ENCODE measurements at regions of chr1 and their contacts with region 1.

Region 1: DNA sequence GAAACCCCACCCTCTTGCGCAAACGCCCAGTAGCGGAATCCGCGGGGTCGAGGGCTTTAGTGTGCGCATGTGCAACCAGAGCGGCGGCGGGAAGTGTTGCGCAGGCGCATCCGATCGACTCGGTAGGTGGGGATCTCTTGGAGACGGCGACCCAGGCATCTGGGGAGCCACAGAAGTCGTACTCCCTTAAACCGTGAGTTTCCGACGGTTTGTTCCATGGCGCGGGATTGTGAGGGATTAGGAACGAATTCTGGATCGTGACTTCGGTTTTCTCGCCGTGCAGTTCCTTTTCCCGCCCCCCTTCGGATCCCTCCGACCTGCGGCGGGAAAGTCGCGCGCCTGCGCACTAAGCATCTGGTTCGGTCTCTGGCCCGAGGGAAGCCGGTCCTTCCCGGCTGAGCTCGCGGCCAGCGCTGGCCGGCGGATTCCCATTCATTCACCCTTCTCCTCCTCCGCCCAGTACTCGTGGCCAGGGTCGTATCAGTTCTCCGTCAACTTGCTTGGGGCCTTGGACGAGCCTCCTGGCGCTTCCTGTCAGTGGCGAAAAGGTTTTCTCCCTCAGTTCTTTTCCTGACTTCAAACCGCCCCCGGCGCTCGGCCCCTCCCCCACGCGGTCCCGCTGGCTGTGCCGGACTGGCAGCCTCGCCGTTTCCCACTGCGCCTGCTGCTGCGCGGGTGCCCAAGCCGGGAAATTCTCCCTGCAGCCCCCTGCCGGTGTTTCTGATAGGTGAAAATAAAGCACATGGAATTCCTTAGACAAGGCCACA is at the start of gene CDC7:
- DNase-seq: peak; percentile 96
- H3K4me3 ChIP-seq: peak within 1 kb of the TSS; percentile 60 to 89 (median 62)
- H3K27ac ChIP-seq: peak within 1 kb of the TSS; percentile 91
- H3K4me1 ChIP-seq: peaks cover 16% of the 10 kb centered on the region
- H3K27me3 ChIP-seq: no peaks in the 10 kb centered on the region
- CTCF ChIP-seq: peak; percentile 51 to 54
- POLR2A ChIP-seq: peak; percentile 61
- total RNA-seq, gene CDC7: 11.7 and 13.4 TPM in 2 replicates

Region 2: DNA sequence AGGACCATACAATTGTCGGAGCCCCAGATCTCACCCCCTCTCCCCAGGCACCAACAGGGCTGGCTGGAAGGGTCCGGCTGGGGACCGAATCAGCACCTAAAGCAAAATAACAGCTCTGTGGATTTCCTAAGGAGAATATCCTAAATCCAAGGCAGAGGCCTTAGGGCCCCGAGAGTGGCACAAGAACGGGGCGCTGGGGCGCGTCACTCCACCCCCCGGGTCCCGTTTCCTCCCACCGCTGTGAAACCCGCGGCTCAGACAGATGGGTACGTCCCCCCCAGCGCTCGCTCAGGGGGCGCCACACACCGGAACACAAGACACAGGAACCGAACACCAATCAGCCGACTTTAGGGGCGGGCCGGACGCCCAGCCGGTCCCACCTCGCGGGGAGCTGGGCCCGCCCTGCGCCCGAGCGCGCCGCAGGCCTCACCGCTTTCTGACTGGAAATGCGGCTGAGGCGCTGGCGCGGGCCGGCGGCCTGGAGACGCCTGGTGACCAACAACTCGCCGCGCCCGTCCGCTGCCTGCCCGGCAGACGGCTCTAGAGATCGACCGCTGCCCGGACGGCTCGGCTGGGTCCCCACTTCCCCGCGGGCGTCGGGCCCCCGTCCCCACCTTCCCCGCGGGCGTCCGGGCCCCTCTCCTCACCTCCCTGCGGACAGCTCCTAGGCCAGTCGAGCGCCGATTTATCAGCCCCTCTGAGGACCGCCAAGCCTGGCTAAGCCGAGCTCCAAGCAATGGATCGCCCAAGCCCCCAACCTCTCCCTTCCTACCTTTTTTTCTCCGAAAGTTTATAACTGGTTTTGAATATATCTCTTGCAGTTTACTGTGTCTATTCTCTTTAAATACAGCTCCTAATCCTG is 96.6 kb before region 1 on chr1 and contains the start of gene HFM1:
- CTCF ChIA-PET with region 1: interaction called, 4 read pairs
- POLR2A ChIA-PET with region 1: no interaction called
- dilution Hi-C with region 1: no loop called
- intact Hi-C with region 1: loop called (anchors 2 kb)
- DNase-seq: peak; percentile 58
- H3K4me3 ChIP-seq: peak within 1 kb of the TSS; percentile 57 to 74 (median 71)
- H3K27ac ChIP-seq: no peak within 1 kb of the TSS
- H3K4me1 ChIP-seq: peaks cover 3% of the 10 kb centered on the region
- H3K27me3 ChIP-seq: peaks cover 4 to 13% of the 10 kb centered on the region in 2 experiments
- CTCF ChIP-seq: no peak
- POLR2A ChIP-seq: no peak
- total RNA-seq, gene HFM1: 0.11 and 0.72 TPM in 2 replicates

Region 3: DNA sequence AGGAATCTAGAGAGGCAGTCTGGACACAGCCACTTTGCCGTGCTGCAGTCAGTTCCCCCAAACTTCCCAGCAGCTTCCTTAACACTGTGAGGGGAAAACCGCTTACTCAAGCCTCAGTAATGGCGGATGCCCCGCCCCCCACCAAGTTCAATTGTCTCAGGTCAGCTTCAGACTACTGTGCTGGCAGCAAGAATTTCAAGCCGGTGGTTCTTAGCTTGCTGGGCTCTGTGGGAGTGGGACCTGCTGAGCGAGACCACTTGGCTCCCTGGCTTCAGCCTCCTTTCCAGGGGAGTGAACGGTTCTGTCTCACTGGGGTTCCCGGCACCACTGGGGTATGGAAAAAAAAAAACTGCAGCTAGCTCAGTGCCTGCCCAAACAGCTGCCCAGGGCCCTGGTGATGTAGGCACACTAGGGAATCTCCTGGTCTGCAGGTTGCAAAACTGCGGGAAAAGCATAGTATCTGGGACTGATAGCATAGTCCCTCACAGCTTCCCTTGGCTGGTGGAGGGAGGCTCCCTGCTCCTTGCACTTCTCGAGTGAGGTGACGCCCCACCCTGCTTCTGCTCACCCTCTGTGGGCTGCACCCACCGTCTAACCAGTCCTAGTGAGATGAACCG is 72.6 kb before region 1 on chr1:
- CTCF ChIA-PET with region 1: no interaction called
- POLR2A ChIA-PET with region 1: no interaction called
- dilution Hi-C with region 1: no loop called
- intact Hi-C with region 1: no loop called
- DNase-seq: no peak
- H3K4me3 ChIP-seq: no peak overlapping the region
- H3K27ac ChIP-seq: no peak overlapping the region
- H3K4me1 ChIP-seq: no peaks in the 10 kb centered on the region
- H3K27me3 ChIP-seq: no peaks in the 10 kb centered on the region
- CTCF ChIP-seq: no peak
- POLR2A ChIP-seq: no peak

Region 4: GRCh38 chr1:91440845-91441244 is 60.1 kb before region 1 on chr1:
- CTCF ChIA-PET with region 1: interaction called, 3 read pairs
- POLR2A ChIA-PET with region 1: no interaction called
- dilution Hi-C with region 1: no loop called
- intact Hi-C with region 1: loop called (anchors 2 kb)
- DNase-seq: peak; percentile 12
- H3K4me3 ChIP-seq: no peak overlapping the region
- H3K27ac ChIP-seq: no peak overlapping the region
- H3K4me1 ChIP-seq: no peaks in the 10 kb centered on the region
- H3K27me3 ChIP-seq: no peaks in the 10 kb centered on the region
- CTCF ChIP-seq: no peak
- POLR2A ChIP-seq: no peak

Region 5: GRCh38 chr1:91511386-91511785 is 10.4 kb after region 1 on chr1:
- CTCF ChIA-PET with region 1: interaction called, 17 read pairs
- POLR2A ChIA-PET with region 1: no interaction called
- dilution Hi-C with region 1: no loop called
- intact Hi-C with region 1: no loop called
- DNase-seq: peak; percentile 57
- H3K4me3 ChIP-seq: no peak overlapping the region
- H3K27ac ChIP-seq: no peak overlapping the region
- H3K4me1 ChIP-seq: no peaks in the 10 kb centered on the region
- H3K27me3 ChIP-seq: no peaks in the 10 kb centered on the region
- CTCF ChIP-seq: peak; percentile 24 to 43
- POLR2A ChIP-seq: no peak

Region 6: GRCh38 chr1:92298573-92299476 is 797.9 kb after region 1 on chr1 and contains the starts of genes GLMN and RPAP2:
- CTCF ChIA-PET with region 1: no interaction called
- POLR2A ChIA-PET with region 1: no interaction called
- dilution Hi-C with region 1: no loop called
- intact Hi-C with region 1: loop called (anchors 5 kb)
- DNase-seq: peak; percentile 90
- H3K4me3 ChIP-seq: peak within 1 kb of the TSS; percentile 68 to 99 (median 97)
- H3K27ac ChIP-seq: peak within 1 kb of the TSS; percentile 89
- H3K4me1 ChIP-seq: peaks cover 10% of the 10 kb centered on the region
- H3K27me3 ChIP-seq: no peaks in the 10 kb centered on the region
- CTCF ChIP-seq: peak; percentile 3 to 23
- POLR2A ChIP-seq: peak; percentile 92
- total RNA-seq, gene GLMN: 13.2 and 13.7 TPM in 2 replicates
- total RNA-seq, gene RPAP2: 23.5 and 24.9 TPM in 2 replicates